ENCODE measurements at regions of chr19 and their contacts with region 1.

Region 1: DNA sequence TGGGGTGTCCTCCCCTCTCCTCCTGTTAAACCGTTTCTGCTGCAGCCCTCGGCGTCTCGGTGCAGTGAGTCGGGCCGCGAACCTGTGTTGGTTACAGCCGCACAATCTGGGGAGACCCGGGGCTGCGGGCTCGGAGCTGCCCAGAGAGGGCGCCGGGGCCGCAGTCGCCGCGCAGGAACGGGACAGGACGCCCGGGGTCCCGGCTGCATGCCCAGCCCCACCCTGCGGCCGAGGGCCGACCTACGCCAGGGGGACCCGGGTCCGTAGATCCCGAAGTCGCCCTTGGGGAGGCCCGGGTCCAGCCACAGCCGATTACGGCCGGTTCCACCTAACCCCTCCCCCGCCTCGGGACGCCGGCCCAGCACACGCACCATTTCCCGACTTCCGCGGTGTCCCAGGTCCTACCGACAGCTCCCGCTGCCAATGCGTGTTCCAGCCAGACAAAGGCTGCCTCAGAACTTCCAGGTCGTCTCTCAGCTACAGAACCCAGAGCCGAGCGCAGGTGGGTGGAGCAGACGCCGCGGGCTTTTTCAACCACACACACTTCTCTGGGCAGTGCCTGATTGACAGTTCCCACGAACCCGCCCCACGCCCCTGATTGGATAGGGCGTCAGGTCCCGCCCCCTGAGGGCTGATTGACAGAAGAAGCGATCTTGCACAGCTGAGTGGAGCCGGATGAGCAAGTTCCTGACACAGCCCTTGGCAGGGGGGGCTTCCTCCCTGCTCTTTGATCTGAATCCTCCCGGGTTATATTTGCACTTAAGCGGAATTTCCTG is at the start of gene ZNF443:
- DNase-seq: peak; percentile 99
- ATAC-seq: peak; percentile 100
- H3K4me3 ChIP-seq: peak within 1 kb of the TSS; percentile 33 to 95 (median 71)
- H3K27ac ChIP-seq: peak within 1 kb of the TSS in 9 of 10 donors; percentile 72 to 83 (median 80)
- H3K4me1 ChIP-seq: peaks cover 0 to 12% (median 0%) of the 10 kb centered on the region in 9 donors
- H3K27me3 ChIP-seq: no peaks in the 10 kb centered on the region
- CTCF ChIP-seq: peak in 4 of 9 donors; percentile 12 to 24 (median 17)
- total RNA-seq, gene ZNF443: 1.2 to 3.4 (median 2.5) TPM

Region 2: GRCh38 chr19:12484371-12485051 is 43.8 kb after region 1 on chr19 and contains the start of gene ZNF709:
- intact Hi-C with region 1: loop called in 2 of 10 experiments (anchors 2 to 5 kb)
- DNase-seq: peak; percentile 92 to 93
- ATAC-seq: peak; percentile 98 to 100 (median 100)
- H3K4me3 ChIP-seq: peak within 1 kb of the TSS; percentile 82 to 96 (median 92)
- H3K27ac ChIP-seq: peak within 1 kb of the TSS in 9 of 10 donors; percentile 55 to 86 (median 82)
- H3K4me1 ChIP-seq: peaks cover 0 to 29% (median 19%) of the 10 kb centered on the region in 9 donors
- H3K27me3 ChIP-seq: no peaks in the 10 kb centered on the region
- CTCF ChIP-seq: no peak
- total RNA-seq, gene ZNF709: 0.95 to 3.4 (median 1.9) TPM